AG04450 (cell line): ENCODE measurements at regions of chr19 and their contacts with region 1.

Region 1: DNA sequence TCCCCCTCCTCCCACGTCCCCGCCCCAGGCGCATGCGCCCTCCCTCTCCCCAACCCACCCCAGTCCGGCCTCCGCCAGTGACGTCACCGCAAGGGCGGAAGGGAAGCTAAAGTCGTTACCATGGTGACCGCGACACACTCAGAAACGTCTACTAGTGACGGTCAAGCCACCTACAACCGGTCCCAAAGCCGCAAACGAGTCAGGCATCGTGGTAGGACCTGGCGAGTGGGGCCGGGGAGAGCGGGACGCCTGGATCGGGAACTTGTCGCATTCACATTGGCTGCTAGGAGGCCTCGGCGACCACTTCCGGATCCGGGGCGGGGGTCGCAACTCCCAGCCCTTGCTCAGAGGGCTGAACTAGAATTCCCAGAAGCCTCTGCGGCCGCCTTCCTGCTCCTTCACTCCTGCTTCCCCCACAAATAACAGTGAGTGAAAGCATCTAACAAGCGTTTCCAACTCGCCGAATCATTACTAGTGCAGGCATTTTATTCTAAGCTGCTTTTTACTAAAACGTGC is at the start of gene ZSCAN5A:
- DNase-seq: peak; percentile 87
- H3K4me3 ChIP-seq: peak within 1 kb of the TSS; percentile 95
- H3K27ac ChIP-seq: peak within 1 kb of the TSS; percentile 97
- H3K27me3 ChIP-seq: no peaks in the 10 kb centered on the region
- CTCF ChIP-seq: no peak
- polyA plus RNA-seq, gene ZSCAN5A: 3.7 and 5.8 TPM in 2 replicates

Region 2: DNA sequence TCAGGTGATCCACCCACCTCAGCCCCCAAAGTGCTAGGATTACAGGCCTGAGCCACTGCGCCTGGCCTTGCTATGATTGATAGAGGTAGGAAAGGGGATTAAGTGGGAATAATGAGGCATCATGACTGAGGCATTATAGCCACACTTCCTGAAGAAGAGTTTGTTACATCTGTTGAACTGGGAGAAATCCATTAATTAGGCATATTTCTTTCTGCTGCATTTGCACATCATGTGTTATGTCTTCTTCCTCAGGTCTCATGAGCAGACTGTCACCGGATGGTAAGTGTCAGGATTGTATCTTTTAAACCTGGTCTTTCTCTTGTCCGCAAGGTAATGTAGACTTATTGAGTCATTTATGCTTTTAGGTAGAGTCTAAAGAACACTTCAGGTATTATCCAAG is 29.9 kb before region 1 on chr19:
- CTCF ChIA-PET with region 1: no interaction called
- POLR2A ChIA-PET with region 1: no interaction called
- DNase-seq: no peak
- H3K4me3 ChIP-seq: no peak overlapping the region
- H3K27ac ChIP-seq: no peak overlapping the region
- H3K27me3 ChIP-seq: no peaks in the 10 kb centered on the region
- CTCF ChIP-seq: no peak

Region 3: DNA sequence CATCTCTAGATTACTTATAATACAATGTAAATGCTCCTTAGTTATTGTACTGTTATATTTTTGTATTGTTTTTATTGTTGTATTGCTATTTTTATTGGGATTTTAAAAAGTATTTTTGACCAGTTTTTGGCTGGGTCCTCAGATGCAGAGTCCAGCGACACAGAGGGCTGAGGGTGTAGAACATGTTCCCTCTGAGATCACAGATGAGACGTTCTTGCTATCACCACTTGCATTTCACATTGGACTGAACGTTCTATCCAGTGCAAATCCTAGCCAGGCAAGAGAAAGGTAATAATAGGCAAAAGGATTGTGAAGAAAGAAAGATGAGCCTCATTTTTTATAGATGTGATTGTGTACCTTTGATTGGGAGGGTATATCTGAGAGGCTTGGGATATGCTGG is 14.9 kb before region 1 on chr19:
- CTCF ChIA-PET with region 1: interaction called, 16 read pairs
- POLR2A ChIA-PET with region 1: no interaction called
- DNase-seq: no peak
- H3K4me3 ChIP-seq: no peak overlapping the region
- H3K27ac ChIP-seq: no peak overlapping the region
- H3K27me3 ChIP-seq: no peaks in the 10 kb centered on the region
- CTCF ChIP-seq: no peak